A673 (cell line): ENCODE measurements at regions of chr20 and their contacts with region 1.

Region 1: DNA sequence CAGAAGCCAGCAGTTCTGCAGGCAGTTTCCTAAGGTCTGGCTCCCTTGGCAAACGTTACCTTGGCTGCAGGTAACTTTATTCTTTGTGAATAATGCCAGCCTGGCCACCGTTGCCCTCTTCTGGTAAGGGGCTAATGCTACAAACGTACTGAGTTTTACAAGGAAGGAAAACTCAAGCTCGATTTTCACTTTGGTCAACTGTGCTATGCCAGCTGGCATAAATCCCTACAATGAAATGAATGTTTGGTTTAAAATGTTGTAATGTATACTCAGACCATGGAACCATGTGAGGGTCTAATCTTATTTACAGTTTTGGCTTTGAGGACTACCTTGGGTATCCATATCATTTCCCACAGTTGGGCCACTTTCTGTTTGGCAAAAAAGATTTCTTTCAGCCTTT is 101.4 kb downstream of the SLX4IP start:
- DNase-seq: no peak
- H3K4me3 ChIP-seq: no peak overlapping the region
- H3K27ac ChIP-seq: peak overlapping the region; percentile 48
- H3K4me1 ChIP-seq: peaks cover 47% of the 10 kb centered on the region
- H3K27me3 ChIP-seq: no peaks in the 10 kb centered on the region
- CTCF ChIP-seq: peak; percentile 65

Region 2: DNA sequence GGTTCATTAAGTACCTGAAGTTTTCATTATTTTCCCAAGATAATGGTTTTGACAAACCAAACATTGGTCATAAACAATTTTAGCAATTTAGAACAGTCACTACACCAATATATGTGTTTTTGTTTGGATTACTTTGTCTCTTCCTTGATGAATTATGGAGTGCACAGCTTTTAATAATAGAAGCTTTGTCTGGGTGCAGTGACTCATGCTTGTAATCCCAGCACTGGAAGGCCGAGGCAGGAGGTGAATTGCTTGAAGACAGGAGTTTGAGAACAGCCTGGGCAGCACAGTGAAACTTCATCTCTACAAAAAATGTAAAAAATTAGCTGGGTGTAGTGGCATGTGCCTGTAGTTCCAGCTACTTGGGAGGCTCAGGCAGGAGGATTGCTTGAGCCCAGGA is 591.1 kb before region 1 on chr20:
- CTCF ChIA-PET with region 1: no interaction called
- POLR2A ChIA-PET with region 1: no interaction called
- intact Hi-C with region 1: no loop called
- DNase-seq: peak; percentile 39
- H3K4me3 ChIP-seq: no peak overlapping the region
- H3K27ac ChIP-seq: no peak overlapping the region
- H3K4me1 ChIP-seq: no peaks in the 10 kb centered on the region
- H3K27me3 ChIP-seq: no peaks in the 10 kb centered on the region
- CTCF ChIP-seq: no peak

Region 3: GRCh38 chr20:10090588-10091166 is 445.9 kb before region 1 on chr20:
- CTCF ChIA-PET with region 1: no interaction called
- POLR2A ChIA-PET with region 1: no interaction called
- intact Hi-C with region 1: loop called (anchors 10 kb)
- DNase-seq: peak; percentile 66
- H3K4me3 ChIP-seq: no peak overlapping the region
- H3K27ac ChIP-seq: no peak overlapping the region
- H3K4me1 ChIP-seq: no peaks in the 10 kb centered on the region
- H3K27me3 ChIP-seq: no peaks in the 10 kb centered on the region
- CTCF ChIP-seq: peak; percentile 79

Region 4: DNA sequence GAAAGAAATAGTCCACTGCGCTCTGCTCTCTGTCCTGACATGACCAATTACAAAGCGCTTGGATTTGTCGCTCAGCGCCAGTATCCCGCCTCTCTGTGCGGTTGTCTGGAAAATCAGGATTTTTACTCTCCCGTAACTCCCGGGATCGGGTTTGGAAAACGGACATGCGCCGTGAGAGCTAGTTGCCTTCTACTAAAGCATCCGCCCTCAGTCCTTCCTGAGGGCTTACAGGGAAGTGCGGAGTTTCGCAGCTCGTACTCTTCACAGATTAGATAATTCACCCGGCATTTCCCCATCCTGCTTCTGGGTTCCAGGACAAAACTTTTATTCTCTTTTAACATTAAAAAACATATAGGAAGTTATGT is 102.1 kb before region 1 on chr20:
- CTCF ChIA-PET with region 1: no interaction called
- POLR2A ChIA-PET with region 1: no interaction called
- intact Hi-C with region 1: loop called (anchors 5 kb)
- DNase-seq: peak; percentile 99
- H3K4me3 ChIP-seq: peak overlapping the region; percentile 78
- H3K27ac ChIP-seq: peak overlapping the region; percentile 87
- H3K4me1 ChIP-seq: peaks cover 43% of the 10 kb centered on the region
- H3K27me3 ChIP-seq: no peaks in the 10 kb centered on the region
- CTCF ChIP-seq: no peak

Region 5: GRCh38 chr20:11379257-11380011 is 842.9 kb after region 1 on chr20:
- CTCF ChIA-PET with region 1: no interaction called
- POLR2A ChIA-PET with region 1: no interaction called
- intact Hi-C with region 1: loop called (anchors 5 kb)
- DNase-seq: peak; percentile 94
- H3K4me3 ChIP-seq: peak overlapping the region; percentile 7
- H3K27ac ChIP-seq: no peak overlapping the region
- H3K4me1 ChIP-seq: peaks cover 19% of the 10 kb centered on the region
- H3K27me3 ChIP-seq: no peaks in the 10 kb centered on the region
- CTCF ChIP-seq: peak; percentile 30; the same call in 1 of the 2 replicates